ENCODE measurements at regions of chr2 and their contacts with region 1.

Region 1: DNA sequence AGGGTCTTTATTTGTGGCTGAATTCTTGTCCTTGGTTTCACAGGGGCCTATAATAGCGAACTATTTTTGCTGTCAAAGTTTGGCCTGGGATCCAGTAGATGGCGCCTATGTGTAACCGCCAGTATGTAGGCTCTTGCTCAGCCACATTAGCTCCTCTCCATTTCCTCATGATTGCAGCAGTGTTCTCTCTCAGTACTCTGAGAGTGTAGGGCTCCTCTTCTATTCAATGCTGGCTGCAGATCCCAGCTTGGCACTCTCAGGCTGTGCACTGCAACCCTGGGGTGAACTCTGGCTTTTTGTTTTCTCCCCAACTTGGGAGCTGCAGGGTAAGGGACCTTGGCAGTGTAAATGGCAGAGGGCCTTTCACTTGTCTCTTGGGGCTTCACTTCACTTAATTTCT is 344.6 kb upstream of the CHAC2 start:
- DNase-seq: no peak
- ATAC-seq: peak; percentile 97
- H3K4me3 ChIP-seq: no peak overlapping the region
- H3K27ac ChIP-seq: no peak overlapping the region
- H3K4me1 ChIP-seq: no peaks in the 10 kb centered on the region
- H3K27me3 ChIP-seq: no peaks in the 10 kb centered on the region
- CTCF ChIP-seq: peak in 1 of 2 donors; percentile 16

Region 2: DNA sequence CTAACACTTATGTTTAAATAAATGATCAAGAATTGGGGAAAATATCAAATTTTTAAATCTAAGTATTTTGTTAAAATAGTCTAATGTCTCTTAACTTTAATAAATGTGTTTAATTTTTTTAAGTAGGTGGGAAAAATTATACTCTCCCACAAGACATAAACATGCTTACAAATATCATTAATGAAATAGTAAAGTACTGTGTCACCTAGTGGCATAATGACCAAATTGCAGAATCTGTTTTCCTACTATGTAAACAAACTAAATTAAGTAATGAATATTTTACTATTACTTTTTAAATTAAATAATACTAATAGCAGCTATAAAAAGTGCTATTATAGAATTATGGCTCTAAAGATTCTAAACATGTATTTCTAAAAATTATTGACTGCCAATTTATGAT is 292.6 kb after region 1 on chr2:
- intact Hi-C with region 1: loop called in 1 of 2 experiments (anchors 10 kb)
- DNase-seq: peak in 1 of 4 donors; percentile 4
- ATAC-seq: peak; percentile 34
- H3K4me3 ChIP-seq: no peak overlapping the region
- H3K27ac ChIP-seq: no peak overlapping the region
- H3K4me1 ChIP-seq: no peaks in the 10 kb centered on the region
- H3K27me3 ChIP-seq: no peaks in the 10 kb centered on the region
- CTCF ChIP-seq: peak; percentile 36 to 48